Calu3 (cell line): ENCODE measurements at regions of chr10 and their contacts with region 1.

Region 1: DNA sequence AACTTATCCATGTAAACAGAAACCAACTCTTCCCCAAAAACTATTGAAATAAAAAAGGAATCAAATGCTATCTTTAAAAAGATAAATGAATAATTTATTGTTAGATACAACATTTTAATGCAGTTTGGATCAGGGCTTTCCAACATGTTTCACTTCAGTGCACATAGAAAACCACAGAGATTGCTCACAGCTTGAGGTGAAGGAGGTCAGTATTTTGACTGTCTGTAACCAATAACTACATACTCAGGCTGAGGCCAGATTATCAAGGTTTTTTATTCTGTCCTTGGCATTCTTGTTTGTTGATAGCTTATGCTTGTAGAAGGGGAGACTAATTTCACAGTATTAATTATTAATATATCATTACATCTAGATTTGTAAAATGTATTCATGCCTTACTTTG is 195.5 kb downstream of the PRKG1 start:
- DNase-seq: no peak
- H3K4me3 Mint-ChIP-seq: no peak overlapping the region
- H3K27ac Mint-ChIP-seq: no peak overlapping the region
- H3K4me1 Mint-ChIP-seq: no peaks in the 10 kb centered on the region
- H3K27me3 Mint-ChIP-seq: peaks cover 13% of the 10 kb centered on the region
- CTCF ChIP-seq: no peak

Region 2: DNA sequence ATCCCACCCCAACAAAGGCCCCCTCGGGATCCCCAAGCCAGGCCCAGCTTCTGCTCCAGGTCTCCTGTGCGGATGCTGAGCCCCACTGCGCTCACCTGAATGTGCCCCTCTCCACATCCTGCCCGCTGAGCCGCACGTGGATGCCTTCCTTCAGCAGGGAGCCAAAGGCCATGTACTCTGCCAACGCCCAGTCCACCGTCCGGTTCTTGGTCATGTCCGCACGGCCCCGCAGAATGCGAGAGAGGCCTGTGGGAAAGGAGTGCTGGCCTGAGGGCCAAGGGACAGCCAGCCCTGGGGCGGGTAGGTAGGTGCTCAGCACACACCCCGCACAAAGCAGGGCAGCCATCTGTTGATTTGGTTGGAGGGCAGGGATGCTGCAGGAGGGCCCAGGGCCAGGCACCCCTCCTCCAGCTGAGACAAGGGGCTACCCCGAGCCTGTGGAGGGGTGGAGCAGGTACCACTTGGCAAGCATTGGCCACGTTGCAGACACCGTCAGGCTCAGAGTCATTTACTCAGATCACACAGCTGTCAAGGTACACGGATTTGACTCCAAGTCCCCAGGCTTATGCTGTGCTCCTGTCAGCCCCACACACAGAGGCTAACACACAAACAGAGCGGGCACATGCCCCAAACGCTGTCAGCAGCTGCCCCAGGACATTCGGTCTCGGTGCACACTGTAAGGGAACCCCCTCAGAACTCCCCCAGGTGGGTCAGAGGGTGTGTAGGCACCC is 1526.9 kb before region 1 on chr10:
- CTCF ChIA-PET with region 1: interaction called, 10 read pairs
- intact Hi-C with region 1: no loop called
- DNase-seq: no peak
- H3K4me3 Mint-ChIP-seq: no peak overlapping the region
- H3K27ac Mint-ChIP-seq: no peak overlapping the region
- H3K4me1 Mint-ChIP-seq: no peaks in the 10 kb centered on the region
- H3K27me3 Mint-ChIP-seq: peaks cover 11% of the 10 kb centered on the region
- CTCF ChIP-seq: no peak

Region 3: GRCh38 chr10:50937230-50937907 is 332.4 kb before region 1 on chr10:
- CTCF ChIA-PET with region 1: no interaction called
- intact Hi-C with region 1: no loop called
- DNase-seq: peak; percentile 13
- H3K4me3 Mint-ChIP-seq: no peak overlapping the region
- H3K27ac Mint-ChIP-seq: no peak overlapping the region
- H3K4me1 Mint-ChIP-seq: no peaks in the 10 kb centered on the region
- H3K27me3 Mint-ChIP-seq: peaks cover 38% of the 10 kb centered on the region
- CTCF ChIP-seq: peak; percentile 24

Region 4: DNA sequence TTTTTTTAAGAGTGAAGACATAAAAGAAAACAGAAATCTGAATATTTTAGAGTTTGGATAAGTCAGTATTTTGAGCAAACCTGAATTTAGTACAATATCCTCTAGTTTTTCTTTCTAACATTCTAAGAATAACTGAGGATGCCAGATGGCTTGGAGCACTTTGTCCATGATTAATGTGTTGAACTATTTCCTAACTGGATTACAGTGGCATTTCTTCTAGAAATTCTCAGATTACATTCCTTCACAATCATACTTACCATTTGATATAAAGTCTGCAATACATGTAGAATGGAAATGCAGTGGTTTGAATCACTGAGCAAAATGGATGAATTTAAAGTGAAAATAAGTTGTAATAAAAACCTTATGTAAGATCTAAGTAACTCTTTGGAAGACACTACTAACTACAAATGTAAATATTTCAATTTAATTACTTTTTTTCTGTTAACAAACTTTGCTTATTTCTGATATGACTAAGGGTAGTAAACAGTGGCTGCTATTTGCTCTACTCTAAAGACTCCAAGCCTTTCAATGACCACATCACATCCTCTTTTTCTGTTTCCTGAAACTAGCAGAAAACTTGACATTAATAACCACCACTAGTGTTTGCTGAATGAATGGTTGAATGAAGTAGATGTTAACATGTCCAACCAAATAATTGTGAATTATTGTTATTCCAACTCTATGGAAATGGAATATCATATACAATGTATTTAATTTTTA is 92.7 kb before region 1 on chr10:
- CTCF ChIA-PET with region 1: no interaction called
- intact Hi-C with region 1: no loop called
- DNase-seq: no peak
- H3K4me3 Mint-ChIP-seq: no peak overlapping the region
- H3K27ac Mint-ChIP-seq: no peak overlapping the region
- H3K4me1 Mint-ChIP-seq: no peaks in the 10 kb centered on the region
- H3K27me3 Mint-ChIP-seq: no peaks in the 10 kb centered on the region
- CTCF ChIP-seq: no peak